ENCODE measurements at regions of chr1 and their contacts with region 1.

Region 1: DNA sequence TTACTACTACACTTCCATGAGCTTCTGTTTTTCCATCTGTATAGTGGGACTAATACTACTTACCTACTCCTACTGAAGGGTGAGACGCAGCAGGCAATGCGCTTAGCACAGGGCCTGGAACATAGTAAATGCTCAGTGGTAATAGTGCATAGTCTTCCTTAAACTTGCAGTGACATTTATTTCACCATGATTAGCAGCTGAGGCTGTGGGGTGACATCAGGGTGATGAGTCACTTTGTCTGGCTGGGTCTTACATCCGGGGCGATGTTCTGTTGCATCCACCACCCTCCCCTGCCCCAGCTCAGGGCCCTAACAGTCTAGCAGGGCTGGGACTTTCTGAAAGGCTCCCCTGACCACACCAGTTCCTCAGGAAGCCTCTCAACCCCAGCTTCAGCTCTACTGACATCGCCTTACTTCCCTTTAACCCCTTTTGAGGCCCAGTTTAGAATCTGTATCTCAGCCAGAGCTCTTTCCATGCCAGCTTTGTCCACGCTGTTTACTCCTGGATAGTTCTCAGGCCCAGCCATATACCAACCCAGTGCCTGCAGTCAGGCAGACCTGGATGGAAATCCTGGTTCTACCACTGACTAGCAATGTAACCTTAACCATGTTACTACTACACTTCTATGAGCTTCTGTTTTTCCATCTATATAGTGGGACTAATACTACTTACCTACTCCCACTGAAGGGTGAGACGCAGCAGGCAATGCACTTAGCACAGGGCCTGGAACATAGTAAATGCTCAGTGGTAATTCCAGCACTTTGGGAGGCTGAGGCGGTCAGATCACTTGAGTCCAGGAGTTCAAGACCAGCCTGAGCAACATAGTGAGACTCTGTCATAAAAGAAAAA is 66.3 kb downstream of the CD58 start:
- DNase-seq: peak; percentile 46 to 67
- ATAC-seq: peak; percentile 71 to 84
- H3K4me3 ChIP-seq: no peak overlapping the region
- H3K27ac ChIP-seq: no peak overlapping the region
- H3K4me1 ChIP-seq: no peaks in the 10 kb centered on the region
- H3K27me3 ChIP-seq: no peaks in the 10 kb centered on the region
- CTCF ChIP-seq: no peak
- POLR2A ChIP-seq: no peak

Region 2: GRCh38 chr1:116133696-116134650 is 370.6 kb before region 1 on chr1:
- in situ Hi-C with region 1: loop called in 1 of 4 experiments (anchors 5 kb)
- intact Hi-C with region 1: loop called (anchors 1 kb)
- DNase-seq: no peak
- ATAC-seq: no peak
- H3K4me3 ChIP-seq: no peak overlapping the region
- H3K27ac ChIP-seq: no peak overlapping the region
- H3K4me1 ChIP-seq: no peaks in the 10 kb centered on the region
- H3K27me3 ChIP-seq: no peaks in the 10 kb centered on the region
- CTCF ChIP-seq: no peak
- POLR2A ChIP-seq: no peak

Region 3: DNA sequence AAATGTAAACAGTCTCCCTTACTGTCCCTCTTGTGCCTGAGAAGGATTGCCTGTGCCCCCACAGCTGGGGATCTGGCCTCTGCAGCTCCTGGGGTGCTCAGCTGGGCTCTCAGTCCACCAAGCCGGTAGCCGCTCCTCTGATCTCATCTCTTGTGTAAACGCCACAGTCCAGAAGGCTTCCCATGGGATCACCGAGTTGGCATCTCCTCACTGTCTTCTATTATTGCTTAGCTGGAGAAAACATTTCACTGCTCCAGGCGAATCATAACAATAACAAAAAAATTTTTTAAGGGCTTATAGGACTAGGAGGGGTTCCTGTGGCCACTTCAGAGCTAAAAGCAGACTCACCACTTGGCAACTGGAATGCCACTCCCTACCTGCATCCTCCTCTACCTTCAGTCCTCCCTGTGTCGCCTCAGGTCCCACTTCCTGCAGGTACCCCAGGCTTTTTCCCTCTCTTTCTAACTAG is 55.7 kb before region 1 on chr1:
- in situ Hi-C with region 1: no loop called
- intact Hi-C with region 1: no loop called
- DNase-seq: no peak
- ATAC-seq: no peak
- H3K4me3 ChIP-seq: no peak overlapping the region
- H3K27ac ChIP-seq: no peak overlapping the region
- H3K4me1 ChIP-seq: no peaks in the 10 kb centered on the region
- H3K27me3 ChIP-seq: no peaks in the 10 kb centered on the region
- CTCF ChIP-seq: no peak
- POLR2A ChIP-seq: no peak